Activated CD8-positive, alpha-beta T cell treated with anti-CD3 and anti-CD28 coated beads, Interleukin-2, amount 10 ng/mL, durations not matched to agents 7 days and 5 days (primary cell): ENCODE measurements at regions of chr11 and their contacts with region 1.

Region 1: DNA sequence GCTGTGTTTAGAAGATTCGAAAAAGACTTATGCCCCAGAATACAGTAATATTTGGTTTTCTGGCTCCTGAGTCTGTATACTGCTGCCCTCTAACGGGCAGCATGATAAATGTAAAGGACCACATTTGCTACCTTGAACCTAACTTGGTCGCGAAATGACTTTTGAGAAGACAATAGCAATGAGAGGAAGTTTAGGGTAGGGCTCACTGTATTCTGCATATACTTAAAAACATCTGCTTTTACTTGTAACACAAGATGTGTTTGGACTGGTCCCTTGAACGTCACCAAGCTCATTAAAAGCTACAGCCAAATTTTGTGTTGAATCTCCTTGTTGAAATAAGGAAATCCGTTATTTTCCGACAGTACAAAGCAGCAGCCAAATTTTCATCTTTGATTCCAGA is 309.1 kb downstream of the SWAP70 start:
- DNase-seq: peak; percentile 44
- ATAC-seq: peak; percentile 60
- H3K4me3 Mint-ChIP-seq: no peak overlapping the region
- H3K27ac Mint-ChIP-seq: no peak overlapping the region
- H3K4me1 Mint-ChIP-seq: peaks cover 3% of the 10 kb centered on the region
- H3K27me3 Mint-ChIP-seq: no peaks in the 10 kb centered on the region

Region 2: GRCh38 chr11:9847636-9848035 is 125.4 kb before region 1 on chr11:
- CTCF ChIA-PET with region 1: no interaction called
- POLR2A ChIA-PET with region 1: no interaction called
- DNase-seq: no peak
- ATAC-seq: no peak
- H3K4me3 Mint-ChIP-seq: no peak overlapping the region
- H3K27ac Mint-ChIP-seq: no peak overlapping the region
- H3K4me1 Mint-ChIP-seq: peaks cover 10% of the 10 kb centered on the region
- H3K27me3 Mint-ChIP-seq: peaks cover 2% of the 10 kb centered on the region

Region 3: GRCh38 chr11:9861860-9862725 is 110.9 kb before region 1 on chr11:
- CTCF ChIA-PET with region 1: interaction called, 14 read pairs
- POLR2A ChIA-PET with region 1: no interaction called
- DNase-seq: peak; percentile 69
- ATAC-seq: peak; percentile 82
- H3K4me3 Mint-ChIP-seq: no peak overlapping the region
- H3K27ac Mint-ChIP-seq: no peak overlapping the region
- H3K4me1 Mint-ChIP-seq: peaks cover 36% of the 10 kb centered on the region
- H3K27me3 Mint-ChIP-seq: no peaks in the 10 kb centered on the region